Calu3 (cell line): ENCODE measurements at regions of chr7 and their contacts with region 1.

Region 1: GRCh38 chr7:28124413-28124812 is 56.2 kb downstream of the JAZF1 start:
- DNase-seq: no peak
- H3K4me3 Mint-ChIP-seq: no peak overlapping the region
- H3K27ac Mint-ChIP-seq: no peak overlapping the region
- H3K4me1 Mint-ChIP-seq: no peaks in the 10 kb centered on the region
- H3K27me3 Mint-ChIP-seq: no peaks in the 10 kb centered on the region
- CTCF ChIP-seq: no peak

Region 2: DNA sequence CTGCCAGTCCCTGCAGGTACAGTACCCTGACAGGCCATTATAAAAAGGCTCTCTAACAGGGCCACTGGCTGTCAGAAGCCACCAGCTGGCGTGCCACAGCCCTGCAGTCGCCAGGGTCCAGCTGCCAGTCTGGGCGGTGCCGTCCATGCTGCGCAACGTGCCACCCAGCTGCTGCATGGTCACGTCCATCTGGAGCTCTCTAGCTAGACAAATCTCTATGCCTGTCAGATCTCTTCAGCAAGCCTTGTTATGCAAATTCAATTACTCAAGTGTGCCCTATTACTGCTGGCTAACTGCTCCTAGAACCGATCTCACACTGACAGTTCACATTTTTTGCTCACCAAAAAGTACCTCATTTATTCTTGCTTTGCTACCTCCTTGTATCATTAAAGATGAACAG is 537.6 kb before region 1 on chr7:
- CTCF ChIA-PET with region 1: no interaction called
- intact Hi-C with region 1: no loop called
- DNase-seq: no peak
- H3K4me3 Mint-ChIP-seq: no peak overlapping the region
- H3K27ac Mint-ChIP-seq: no peak overlapping the region
- H3K4me1 Mint-ChIP-seq: no peaks in the 10 kb centered on the region
- H3K27me3 Mint-ChIP-seq: no peaks in the 10 kb centered on the region
- CTCF ChIP-seq: no peak

Region 3: GRCh38 chr7:28647081-28647421 is 522.6 kb after region 1 on chr7:
- CTCF ChIA-PET with region 1: no interaction called
- intact Hi-C with region 1: no loop called
- DNase-seq: no peak
- H3K4me3 Mint-ChIP-seq: no peak overlapping the region
- H3K27ac Mint-ChIP-seq: no peak overlapping the region
- H3K4me1 Mint-ChIP-seq: no peaks in the 10 kb centered on the region
- H3K27me3 Mint-ChIP-seq: no peaks in the 10 kb centered on the region
- CTCF ChIP-seq: no peak

Region 4: DNA sequence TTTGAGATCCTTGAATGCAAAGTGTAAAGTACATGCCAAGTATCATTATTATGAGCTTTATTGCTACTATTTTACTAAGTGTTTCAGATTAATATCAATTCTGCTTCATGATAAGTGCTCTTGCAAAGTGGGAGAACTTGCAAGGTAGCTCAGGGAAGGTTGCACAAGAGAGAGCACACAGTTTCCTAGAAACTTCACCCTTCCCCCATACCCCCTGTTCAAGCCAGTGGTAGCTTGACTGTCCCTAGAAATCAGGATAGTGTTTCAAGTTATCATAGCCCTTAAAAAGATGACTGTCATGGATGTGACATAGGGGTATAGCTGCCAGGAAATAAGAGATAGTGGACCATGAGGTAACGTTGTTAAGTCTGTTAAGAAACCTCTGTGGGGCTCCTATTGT is 582.2 kb after region 1 on chr7:
- CTCF ChIA-PET with region 1: interaction called, 10 read pairs
- intact Hi-C with region 1: no loop called
- DNase-seq: no peak
- H3K4me3 Mint-ChIP-seq: no peak overlapping the region
- H3K27ac Mint-ChIP-seq: no peak overlapping the region
- H3K4me1 Mint-ChIP-seq: peaks cover 7% of the 10 kb centered on the region
- H3K27me3 Mint-ChIP-seq: no peaks in the 10 kb centered on the region
- CTCF ChIP-seq: no peak